MCF 10A (cell line): ENCODE measurements at regions of chr1 and their contacts with region 1.

Region 1: DNA sequence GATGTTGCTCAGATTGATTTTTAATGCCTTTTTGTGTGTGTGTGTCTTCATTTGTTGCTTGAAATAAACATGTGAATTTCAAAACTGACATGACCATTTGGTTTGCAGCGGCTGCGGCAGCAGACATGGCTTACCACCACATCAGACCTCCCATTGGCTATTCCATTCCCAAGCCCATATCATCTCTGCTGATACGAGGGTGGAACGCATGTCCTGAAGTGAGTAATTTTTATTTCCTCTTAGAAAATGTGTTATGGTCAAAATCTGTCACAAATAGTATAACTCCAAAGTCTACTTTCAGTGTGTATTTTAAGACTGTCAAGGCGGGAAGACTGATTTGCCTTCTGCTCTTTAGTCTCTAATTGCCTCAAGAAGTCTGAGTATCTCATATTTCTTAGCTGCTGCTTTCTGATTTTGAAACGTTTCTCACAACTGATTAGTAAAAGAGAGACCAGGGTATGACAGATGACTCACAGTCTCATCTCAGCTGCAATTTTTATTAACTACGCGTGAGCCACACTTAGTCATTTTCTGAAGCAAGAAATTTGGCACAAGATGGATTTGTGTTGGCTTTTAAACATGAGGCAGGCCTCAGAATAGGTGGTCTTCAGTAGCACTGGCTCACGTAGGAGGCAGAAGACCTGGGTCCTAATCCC is 49.0 kb downstream of the LRRC53 start:
- DNase-seq: peak; percentile 78
- H3K4me3 Mint-ChIP-seq: no peak overlapping the region
- H3K27ac Mint-ChIP-seq: peak overlapping the region; percentile 50
- H3K4me1 Mint-ChIP-seq: peaks cover 22% of the 10 kb centered on the region
- H3K27me3 Mint-ChIP-seq: no peaks in the 10 kb centered on the region
- CTCF ChIP-seq: no peak

Region 2: GRCh38 chr1:74197657-74198552 is 265.6 kb before region 1 on chr1 and contains the starts of genes FPGT and LRRIQ3:
- CTCF ChIA-PET with region 1: no interaction called
- POLR2A ChIA-PET with region 1: no interaction called
- intact Hi-C with region 1: loop called (anchors 2 kb)
- DNase-seq: peak; percentile 91
- H3K4me3 Mint-ChIP-seq: peak within 1 kb of the TSS; percentile 93
- H3K27ac Mint-ChIP-seq: peak within 1 kb of the TSS; percentile 97
- H3K4me1 Mint-ChIP-seq: peaks cover 4% of the 10 kb centered on the region
- H3K27me3 Mint-ChIP-seq: no peaks in the 10 kb centered on the region
- CTCF ChIP-seq: no peak
- total RNA-seq, gene FPGT: 9.6 and 14.2 TPM in 2 replicates
- total RNA-seq, gene LRRIQ3: 0.63 and 0.86 TPM in 2 replicates

Region 3: DNA sequence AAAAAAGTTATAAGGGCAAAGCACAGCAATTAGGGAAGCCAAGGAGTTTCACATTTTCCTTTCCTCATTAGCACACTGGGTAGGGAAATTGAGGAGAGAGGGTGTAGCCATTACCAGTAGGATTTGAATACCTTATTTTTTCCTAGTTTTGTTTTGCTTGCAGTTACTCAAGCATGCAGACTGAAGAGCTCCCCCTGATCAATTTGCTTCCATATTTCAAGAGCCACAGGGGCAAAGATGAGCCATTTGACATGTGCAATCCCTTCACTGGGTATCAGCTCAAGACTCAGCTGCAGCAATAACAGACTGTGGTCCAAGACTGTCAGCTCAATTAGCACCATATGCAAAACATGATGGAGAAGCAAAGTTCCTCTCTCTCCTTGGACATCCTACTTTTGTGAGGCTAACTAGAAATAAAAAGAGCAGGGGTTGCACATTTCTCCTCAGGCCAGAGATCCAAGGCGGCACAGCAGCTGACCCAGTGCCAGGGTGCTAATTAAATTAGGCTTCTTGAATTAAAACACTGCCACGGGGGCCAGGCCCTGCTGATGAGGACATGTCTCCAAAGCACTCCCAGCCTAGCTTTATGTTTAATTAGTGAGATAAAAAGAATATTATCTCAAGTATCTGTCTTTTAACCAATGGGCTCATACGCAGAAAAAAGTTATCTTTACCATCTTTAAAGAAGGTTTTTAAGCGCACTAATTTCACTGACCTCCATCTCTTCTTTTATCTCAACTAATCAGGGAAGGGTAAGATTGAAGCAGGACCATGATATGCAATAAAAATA is 85.7 kb after region 1 on chr1:
- CTCF ChIA-PET with region 1: no interaction called
- POLR2A ChIA-PET with region 1: no interaction called
- intact Hi-C with region 1: no loop called
- DNase-seq: no peak
- H3K4me3 Mint-ChIP-seq: no peak overlapping the region
- H3K27ac Mint-ChIP-seq: no peak overlapping the region
- H3K4me1 Mint-ChIP-seq: no peaks in the 10 kb centered on the region
- H3K27me3 Mint-ChIP-seq: peaks cover 7% of the 10 kb centered on the region
- CTCF ChIP-seq: no peak